ENCODE measurements at regions of chr5 and their contacts with region 1.

Region 1: GRCh38 chr5:171387345-171387969 is at the start of gene NPM1:
- DNase-seq: peak; percentile 97 to 99 (median 99)
- H3K4me3 ChIP-seq: peak within 1 kb of the TSS; percentile 74 to 94
- H3K4me3 Mint-ChIP-seq: peak within 1 kb of the TSS; percentile 97 to 99 (median 98)
- H3K27ac ChIP-seq: peak within 1 kb of the TSS; percentile 79
- H3K27ac Mint-ChIP-seq: peak within 1 kb of the TSS; percentile 95 to 100 (median 99)
- H3K4me1 ChIP-seq: peaks cover 45% of the 10 kb centered on the region
- H3K4me1 Mint-ChIP-seq: peaks cover 29 to 58% (median 43%) of the 10 kb centered on the region in 4 donors
- H3K27me3 ChIP-seq: no peaks in the 10 kb centered on the region
- H3K27me3 Mint-ChIP-seq: peaks cover 0 to 3% of the 10 kb centered on the region in 2 donors
- total RNA-seq, gene NPM1: 857 to 892 TPM

Region 2: DNA sequence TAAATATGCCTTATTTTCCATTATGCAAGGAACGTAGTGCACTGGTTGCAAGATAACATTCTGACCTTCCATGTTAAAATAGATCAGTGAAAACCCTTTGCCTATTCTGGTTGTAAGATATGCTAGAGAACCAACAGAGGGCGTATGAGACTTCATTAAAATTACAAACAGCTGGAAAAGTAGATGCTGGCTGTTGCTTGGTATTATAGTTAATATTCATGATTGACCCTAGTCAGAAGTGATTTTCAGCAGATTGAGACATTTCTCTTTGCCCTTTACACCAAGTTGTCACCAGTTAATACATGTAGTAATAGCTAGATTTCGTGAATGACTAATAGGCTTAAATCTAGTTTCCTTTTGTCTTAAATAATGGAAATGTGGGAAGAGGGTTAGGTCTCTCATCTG is 18.1 kb after region 1 on chr5:
- CTCF ChIA-PET with region 1: interaction called, 5 read pairs
- POLR2A ChIA-PET with region 1: interaction called, 12 read pairs
- intact Hi-C with region 1: no loop called
- DNase-seq: no peak
- H3K4me3 ChIP-seq: no peak overlapping the region
- H3K4me3 Mint-ChIP-seq: no peak overlapping the region
- H3K27ac ChIP-seq: no peak overlapping the region
- H3K27ac Mint-ChIP-seq: peak overlapping the region in 3 of 7 donors; percentile 5 to 57 (median 17)
- H3K4me1 ChIP-seq: peaks cover 24% of the 10 kb centered on the region
- H3K4me1 Mint-ChIP-seq: peaks cover 21 to 50% (median 37%) of the 10 kb centered on the region in 4 donors
- H3K27me3 ChIP-seq: no peaks in the 10 kb centered on the region
- H3K27me3 Mint-ChIP-seq: no peaks in the 10 kb centered on the region

Region 3: GRCh38 chr5:172283020-172283861 is 895.8 kb after region 1 on chr5 and contains the start of gene UBTD2:
- CTCF ChIA-PET with region 1: no interaction called
- POLR2A ChIA-PET with region 1: no interaction called
- intact Hi-C with region 1: loop called (anchors 5 kb)
- DNase-seq: peak; percentile 72 to 82 (median 76)
- H3K4me3 ChIP-seq: peak within 1 kb of the TSS; percentile 47 to 71
- H3K4me3 Mint-ChIP-seq: peak within 1 kb of the TSS; percentile 89 to 93 (median 91)
- H3K27ac ChIP-seq: peak within 1 kb of the TSS; percentile 62
- H3K27ac Mint-ChIP-seq: peak within 1 kb of the TSS; percentile 80 to 96 (median 87)
- H3K4me1 ChIP-seq: peaks cover 26% of the 10 kb centered on the region
- H3K4me1 Mint-ChIP-seq: peaks cover 14 to 34% (median 21%) of the 10 kb centered on the region in 4 donors
- H3K27me3 ChIP-seq: no peaks in the 10 kb centered on the region
- H3K27me3 Mint-ChIP-seq: no peaks in the 10 kb centered on the region
- total RNA-seq, gene UBTD2: 6.3 TPM

Measured in CD4-positive, alpha-beta memory T cell (primary cell).